ENCODE measurements at regions of chr6 and their contacts with region 1.

Region 1: DNA sequence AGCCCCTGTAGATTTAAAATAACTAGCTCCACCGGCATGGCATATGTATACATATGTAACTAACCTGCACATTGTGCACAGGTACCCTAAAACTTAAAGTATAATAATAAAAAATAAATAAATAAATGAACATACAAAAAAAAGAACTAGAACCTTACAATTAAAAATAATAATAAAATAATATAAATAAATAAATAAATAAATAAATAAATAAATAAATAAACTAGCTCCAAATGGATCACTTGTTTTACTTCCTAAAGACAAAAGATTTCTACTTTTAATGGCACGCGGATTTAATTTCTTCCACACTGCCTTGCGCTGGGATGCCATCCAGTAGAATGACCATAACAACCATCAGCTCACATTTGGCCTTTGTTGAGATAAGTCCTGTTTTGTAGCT is 141.0 kb upstream of the NRSN1 start:
- DNase-seq: no peak
- ATAC-seq: no peak
- H3K4me3 ChIP-seq: no peak overlapping the region
- H3K27ac ChIP-seq: no peak overlapping the region
- H3K4me1 ChIP-seq: no peaks in the 10 kb centered on the region; the same call in 1 of the 2 replicates
- H3K27me3 ChIP-seq: no peaks in the 10 kb centered on the region
- CTCF ChIP-seq: no peak

Region 2: DNA sequence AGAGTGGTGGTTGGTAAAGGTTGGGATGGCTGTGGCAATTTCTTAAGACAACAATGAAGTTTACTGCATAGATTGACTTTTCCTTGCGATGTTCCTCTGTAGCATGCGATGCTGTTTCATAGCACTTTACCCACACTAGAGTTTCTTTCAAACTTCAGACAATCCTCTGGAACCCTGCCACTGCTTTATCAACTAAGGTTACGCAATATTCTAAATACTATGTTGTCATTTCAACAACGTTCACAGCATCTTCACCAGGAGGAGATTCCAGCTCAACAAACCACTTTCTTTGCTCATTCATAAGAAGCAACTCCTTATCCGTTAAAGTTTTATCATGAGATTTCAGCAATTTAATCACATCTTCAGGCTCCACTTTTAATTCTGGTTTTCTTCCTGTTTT is 20.1 kb before region 1 on chr6:
- CTCF ChIA-PET with region 1: no interaction called
- POLR2A ChIA-PET with region 1: interaction called, 11 read pairs
- intact Hi-C with region 1: no loop called
- DNase-seq: no peak
- ATAC-seq: no peak
- H3K4me3 ChIP-seq: no peak overlapping the region
- H3K27ac ChIP-seq: no peak overlapping the region
- H3K4me1 ChIP-seq: no peaks in the 10 kb centered on the region
- H3K27me3 ChIP-seq: peaks cover 64% of the 10 kb centered on the region
- CTCF ChIP-seq: no peak